Activated CD8-positive, alpha-beta memory T cell treated with anti-CD3 and anti-CD28 coated beads, Interleukin-2, amount 10 ng/mL, durations not matched to agents 7 days and 5 days (primary cell): ENCODE measurements at regions of chr14 and their contacts with region 1.

Region 1: DNA sequence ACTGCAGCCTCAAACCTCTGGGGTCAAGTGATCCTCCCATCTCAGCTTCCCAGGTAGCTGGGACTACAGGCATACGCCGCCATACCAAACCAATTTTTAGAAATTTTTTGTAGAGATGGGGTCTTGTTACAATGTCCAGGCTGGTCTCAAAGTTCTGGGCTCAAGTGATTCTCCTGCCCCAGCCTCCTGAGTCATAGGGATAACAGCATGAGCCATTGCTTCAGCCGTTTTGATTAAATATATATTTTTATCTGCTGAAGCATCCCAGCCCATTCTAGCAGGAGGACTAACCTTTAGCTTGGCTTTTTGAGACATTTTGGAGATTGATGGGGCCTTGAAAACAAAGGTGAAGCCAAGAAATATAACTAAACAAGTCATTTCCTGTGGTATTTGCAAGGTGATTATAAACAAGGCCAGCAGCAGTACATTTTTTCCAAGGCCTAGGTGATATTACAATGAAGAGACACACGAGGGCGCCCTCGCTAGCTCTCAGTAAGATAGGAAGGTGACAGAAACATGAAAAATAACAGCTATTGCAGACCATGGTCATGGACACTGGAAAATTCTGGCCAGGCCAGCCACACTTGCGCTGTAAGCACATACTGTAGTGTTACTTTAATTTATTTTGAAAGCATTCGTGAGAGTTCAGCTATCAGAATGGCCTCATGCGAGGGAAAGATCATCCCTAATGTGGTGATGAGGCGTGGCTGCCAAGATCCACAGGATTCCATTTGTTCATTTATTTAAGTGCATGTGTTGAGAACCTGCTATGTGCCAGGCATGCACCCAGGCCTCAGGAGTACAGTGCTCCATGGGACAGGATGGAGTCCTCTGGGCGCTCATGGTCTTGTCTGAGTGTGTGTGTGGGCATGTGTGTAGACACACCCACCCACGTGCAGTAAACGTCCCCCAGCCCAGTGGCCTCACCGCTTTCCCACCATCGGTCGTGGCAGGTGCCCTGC is 63.5 kb downstream of the DGLUCY start:
- DNase-seq: peak; percentile 80
- ATAC-seq: peak; percentile 87
- H3K4me3 Mint-ChIP-seq: no peak overlapping the region
- H3K27ac Mint-ChIP-seq: peak overlapping the region; percentile 75
- H3K4me1 Mint-ChIP-seq: peaks cover 19% of the 10 kb centered on the region
- H3K27me3 Mint-ChIP-seq: no peaks in the 10 kb centered on the region

Region 2: GRCh38 chr14:91060351-91061055 is 116.9 kb before region 1 on chr14 and contains the start of gene RPS6KA5:
- CTCF ChIA-PET with region 1: interaction called, 11 read pairs
- DNase-seq: peak; percentile 100
- ATAC-seq: peak; percentile 84
- H3K4me3 Mint-ChIP-seq: peak within 1 kb of the TSS; percentile 76
- H3K27ac Mint-ChIP-seq: peak within 1 kb of the TSS; percentile 78
- H3K4me1 Mint-ChIP-seq: peaks cover 57% of the 10 kb centered on the region
- H3K27me3 Mint-ChIP-seq: no peaks in the 10 kb centered on the region
- total RNA-seq, gene RPS6KA5: 48.1 to 58.2 TPM

Region 3: DNA sequence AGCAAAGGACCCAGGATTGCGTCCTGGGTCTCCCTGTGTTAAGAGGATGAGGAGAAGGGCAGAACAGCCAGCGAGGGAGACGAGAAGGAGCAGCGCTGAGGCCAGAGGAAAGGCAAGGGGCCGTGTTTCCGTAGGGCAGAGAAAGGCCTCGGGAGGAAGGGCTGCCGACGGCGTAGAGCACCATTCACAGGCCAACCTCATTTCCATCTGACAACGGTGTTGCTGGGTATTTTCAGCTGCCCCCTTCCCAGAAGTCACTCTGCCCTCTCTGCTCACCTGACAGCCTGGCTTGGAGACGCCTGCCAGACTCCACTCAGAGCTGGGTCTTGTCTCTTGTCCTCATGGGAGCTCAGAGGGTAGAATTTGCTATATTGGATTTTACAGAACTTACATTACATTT is 15.7 kb after region 1 on chr14:
- CTCF ChIA-PET with region 1: interaction called, 31 read pairs
- DNase-seq: no peak
- ATAC-seq: no peak
- H3K4me3 Mint-ChIP-seq: no peak overlapping the region
- H3K27ac Mint-ChIP-seq: no peak overlapping the region
- H3K4me1 Mint-ChIP-seq: peaks cover 44% of the 10 kb centered on the region
- H3K27me3 Mint-ChIP-seq: no peaks in the 10 kb centered on the region

Region 4: DNA sequence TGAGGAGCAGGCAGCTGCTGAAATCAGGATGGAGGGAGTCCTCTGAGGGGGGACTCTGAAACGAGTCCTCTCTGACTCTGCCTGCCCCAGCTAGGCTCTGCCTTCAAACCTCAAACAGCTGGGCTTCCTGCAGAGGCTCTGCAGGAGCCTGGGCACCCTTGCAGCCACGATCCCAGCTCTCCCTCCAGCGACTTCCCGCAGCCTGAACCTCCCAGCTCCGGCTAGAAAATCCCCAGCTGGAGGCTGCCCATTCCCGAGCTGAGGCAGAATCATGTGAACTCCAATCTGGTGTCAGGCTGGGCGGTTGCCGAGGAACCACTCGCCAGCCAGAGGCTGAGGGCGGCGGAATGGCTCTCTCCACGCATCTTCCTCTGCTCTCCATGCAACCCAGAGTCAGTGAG is 67.1 kb after region 1 on chr14 and contains the start of gene GPR68:
- CTCF ChIA-PET with region 1: interaction called, 30 read pairs
- DNase-seq: peak; percentile 72
- ATAC-seq: peak; percentile 12
- H3K4me3 Mint-ChIP-seq: peak within 1 kb of the TSS; percentile 86
- H3K27ac Mint-ChIP-seq: peak within 1 kb of the TSS; percentile 100
- H3K4me1 Mint-ChIP-seq: peaks cover 84% of the 10 kb centered on the region
- H3K27me3 Mint-ChIP-seq: no peaks in the 10 kb centered on the region
- total RNA-seq, gene GPR68: 44.5 to 48.0 TPM

Region 5: GRCh38 chr14:91258011-91258618 is 80.8 kb after region 1 on chr14:
- CTCF ChIA-PET with region 1: interaction called, 12 read pairs
- DNase-seq: no peak
- ATAC-seq: no peak
- H3K4me3 Mint-ChIP-seq: no peak overlapping the region
- H3K27ac Mint-ChIP-seq: peak overlapping the region; percentile 68
- H3K4me1 Mint-ChIP-seq: peaks cover 62% of the 10 kb centered on the region
- H3K27me3 Mint-ChIP-seq: no peaks in the 10 kb centered on the region

Region 6: DNA sequence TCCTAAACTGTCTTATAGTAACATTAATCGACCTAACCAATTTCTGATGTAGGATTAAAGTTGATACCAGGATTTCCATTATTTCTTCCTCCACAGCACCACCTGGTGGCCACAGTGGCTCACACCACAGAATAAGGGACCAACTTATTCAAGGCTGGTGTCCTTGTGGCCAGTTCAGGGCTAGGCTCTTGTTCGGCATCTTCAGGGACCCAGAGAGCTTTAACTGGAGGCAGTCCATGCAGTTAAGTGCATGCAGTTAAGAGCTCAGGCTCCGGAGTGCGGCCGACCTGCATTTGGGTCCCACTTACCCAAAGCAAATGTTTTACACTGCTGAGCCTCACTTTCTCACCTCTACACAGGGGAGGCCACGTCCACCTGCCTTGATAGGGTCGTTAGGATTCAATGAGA is 109.2 kb after region 1 on chr14:
- CTCF ChIA-PET with region 1: interaction called, 67 read pairs
- DNase-seq: peak; percentile 86
- ATAC-seq: peak; percentile 82
- H3K4me3 Mint-ChIP-seq: no peak overlapping the region
- H3K27ac Mint-ChIP-seq: peak overlapping the region; percentile 36
- H3K4me1 Mint-ChIP-seq: peaks cover 25% of the 10 kb centered on the region
- H3K27me3 Mint-ChIP-seq: no peaks in the 10 kb centered on the region